ENCODE measurements at regions of chr15 and their contacts with region 1.

Region 1: GRCh38 chr15:71448688-71449114 is 333.4 kb downstream of the THSD4 start:
- DNase-seq: peak in 1 of 2 donors; percentile 70
- H3K4me3 ChIP-seq: no peak overlapping the region
- H3K27ac ChIP-seq: no peak overlapping the region
- H3K4me1 ChIP-seq: peaks cover 0 to 5% of the 10 kb centered on the region in 2 donors
- H3K27me3 ChIP-seq: no peaks in the 10 kb centered on the region
- CTCF ChIP-seq: peak; percentile 87 to 91 (median 88)

Region 2: DNA sequence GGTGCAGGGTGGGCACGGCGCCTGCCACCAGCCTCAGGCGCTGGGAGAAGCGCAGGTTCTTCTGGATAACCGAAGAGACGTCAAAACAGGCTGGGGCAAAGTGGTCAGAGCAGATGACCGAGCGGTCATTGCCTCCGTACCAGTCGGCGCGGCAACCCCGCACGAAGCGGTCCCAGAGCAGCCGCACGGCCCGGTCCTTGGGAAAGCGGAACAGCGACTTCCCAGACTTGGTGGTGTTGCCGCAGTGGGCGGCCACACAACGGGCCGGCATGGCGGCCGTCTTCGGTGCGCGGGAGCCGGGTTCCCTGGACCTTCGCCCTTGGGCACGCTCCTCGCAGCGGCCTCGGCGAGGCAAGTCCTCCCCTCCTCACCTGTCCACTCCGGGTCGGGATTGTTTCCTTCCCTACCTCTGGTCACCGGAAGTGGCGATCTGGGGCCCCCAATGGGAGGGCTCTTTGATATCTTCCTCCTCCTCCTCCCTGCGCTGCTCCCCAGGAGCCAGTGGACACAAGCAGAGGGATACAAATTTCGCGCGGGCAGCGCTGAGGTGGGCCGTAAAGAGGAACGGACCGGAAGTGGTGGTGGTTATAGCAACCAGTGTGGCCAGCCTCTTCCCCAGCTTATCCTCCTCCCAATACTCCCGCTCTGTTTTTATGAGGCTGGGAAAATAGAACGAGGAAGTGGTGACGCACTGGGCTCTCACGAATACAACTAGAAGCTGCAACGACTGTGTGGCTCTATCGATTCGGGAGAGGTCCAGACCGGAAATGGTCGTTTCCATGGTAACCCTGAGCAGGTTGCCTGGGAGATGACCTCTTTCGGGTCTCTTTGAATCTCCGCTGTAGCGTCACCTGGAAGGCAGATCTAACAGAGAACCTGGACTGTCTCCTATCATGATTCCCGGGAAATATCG is 556.4 kb before region 1 on chr15 and contains the starts of genes LRRC49 and THAP10:
- intact Hi-C with region 1: loop called (anchors 10 kb)
- DNase-seq: peak; percentile 35 to 94
- H3K4me3 ChIP-seq: peak within 1 kb of the TSS; percentile 64 to 81
- H3K27ac ChIP-seq: peak within 1 kb of the TSS; percentile 79 to 80
- H3K4me1 ChIP-seq: peaks cover 0 to 7% of the 10 kb centered on the region in 2 donors
- H3K27me3 ChIP-seq: no peaks in the 10 kb centered on the region
- CTCF ChIP-seq: no peak
- total RNA-seq, gene LRRC49: 23.1 TPM
- total RNA-seq, gene THAP10: 3.1 TPM

Region 3: DNA sequence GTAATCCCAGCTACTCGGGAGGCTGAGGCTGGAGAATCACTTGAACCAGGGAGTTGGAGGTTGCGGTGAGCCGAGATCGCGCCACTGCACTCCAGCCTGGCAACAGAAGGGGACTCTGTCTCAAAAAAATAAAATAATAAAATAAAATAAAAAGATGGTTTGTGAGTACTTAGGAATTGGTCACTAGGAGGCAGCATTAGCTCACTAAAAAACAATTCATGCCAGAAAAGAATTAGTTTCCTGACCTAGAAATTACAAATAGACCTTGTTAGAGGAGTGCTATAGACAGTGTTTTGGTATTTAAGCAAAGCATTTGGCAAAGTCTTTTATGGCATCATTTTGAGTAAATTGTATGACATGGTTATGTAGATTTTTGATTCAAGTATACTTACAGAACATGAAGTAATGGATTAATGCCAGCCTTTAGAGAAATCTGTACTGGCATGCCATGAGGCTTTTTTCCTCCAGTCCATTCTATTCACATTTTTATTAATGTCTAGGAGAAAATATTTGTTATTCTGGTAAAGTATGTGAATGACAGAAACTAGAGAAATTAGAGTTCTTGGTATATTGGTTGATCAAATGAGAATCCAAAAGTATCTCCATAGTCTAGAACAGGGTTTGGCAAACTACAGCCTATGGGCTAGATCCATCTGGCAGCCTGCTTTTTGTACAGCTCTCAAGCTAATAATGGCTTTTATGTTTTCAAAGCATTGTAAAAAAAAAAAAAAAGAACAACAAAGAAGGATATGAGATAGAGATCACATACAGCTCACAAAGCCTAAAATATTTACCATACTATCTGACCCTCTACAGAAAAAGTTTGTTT is 474.5 kb before region 1 on chr15:
- intact Hi-C with region 1: loop called (anchors 10 kb)
- DNase-seq: no peak
- H3K4me3 ChIP-seq: no peak overlapping the region
- H3K27ac ChIP-seq: no peak overlapping the region
- H3K4me1 ChIP-seq: peaks cover 0 to 2% of the 10 kb centered on the region in 2 donors
- H3K27me3 ChIP-seq: no peaks in the 10 kb centered on the region
- CTCF ChIP-seq: peak; percentile 34 to 61 (median 38)

Region 4: GRCh38 chr15:71679223-71680053 is 230.7 kb after region 1 on chr15:
- intact Hi-C with region 1: no loop called
- DNase-seq: no peak
- H3K4me3 ChIP-seq: no peak overlapping the region
- H3K27ac ChIP-seq: no peak overlapping the region
- H3K4me1 ChIP-seq: peaks cover 0 to 16% of the 10 kb centered on the region in 2 donors
- H3K27me3 ChIP-seq: no peaks in the 10 kb centered on the region
- CTCF ChIP-seq: no peak

Measured in ascending aorta (tissue), 2 donors.